AG04449 (cell line): ENCODE measurements at regions of chr2 and their contacts with region 1.

Region 1: GRCh38 chr2:74119912-74120825 is 27.5 kb downstream of the BOLA3 start:
- DNase-seq: peak; percentile 12
- H3K4me3 ChIP-seq: peak overlapping the region; percentile 80
- CTCF ChIP-seq: peak; percentile 83

Region 2: GRCh38 chr2:73920577-73921545 is 199.3 kb before region 1 on chr2:
- CTCF ChIA-PET with region 1: no interaction called
- POLR2A ChIA-PET with region 1: no interaction called
- DNase-seq: no peak
- H3K4me3 ChIP-seq: no peak overlapping the region
- CTCF ChIP-seq: peak; percentile 12

Region 3: GRCh38 chr2:74104839-74105238 is 15.3 kb before region 1 on chr2:
- CTCF ChIA-PET with region 1: interaction called, 19 read pairs
- POLR2A ChIA-PET with region 1: interaction called, 5 read pairs
- DNase-seq: no peak
- H3K4me3 ChIP-seq: no peak overlapping the region
- CTCF ChIP-seq: no peak

Region 4: DNA sequence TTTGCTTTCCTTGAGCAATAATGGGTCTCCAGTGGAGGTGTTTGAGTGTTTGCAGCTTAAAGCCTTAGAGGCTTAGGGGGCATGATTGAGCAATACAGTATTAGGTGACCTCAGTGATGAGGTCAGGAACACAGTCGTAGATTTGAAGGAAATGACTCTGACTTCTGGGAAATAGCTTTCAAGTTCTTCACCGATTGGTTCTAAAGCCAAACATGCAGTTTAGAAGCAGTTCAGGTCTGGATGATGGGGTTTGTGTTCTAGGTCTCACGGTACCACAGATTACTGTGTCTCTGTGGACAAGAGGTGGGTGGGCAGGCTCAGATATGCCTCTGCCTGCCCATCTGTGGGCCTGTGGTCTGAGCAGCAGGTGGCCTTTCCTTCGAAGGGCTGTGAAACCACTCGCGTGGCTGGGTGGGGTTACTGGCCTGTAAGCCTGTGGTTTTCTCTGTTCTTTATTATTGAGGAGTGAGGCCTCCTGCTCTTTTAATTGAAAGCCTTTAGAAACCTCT is 86.1 kb after region 1 on chr2:
- CTCF ChIA-PET with region 1: no interaction called
- POLR2A ChIA-PET with region 1: no interaction called
- DNase-seq: no peak
- H3K4me3 ChIP-seq: no peak overlapping the region
- CTCF ChIP-seq: no peak

Region 5: DNA sequence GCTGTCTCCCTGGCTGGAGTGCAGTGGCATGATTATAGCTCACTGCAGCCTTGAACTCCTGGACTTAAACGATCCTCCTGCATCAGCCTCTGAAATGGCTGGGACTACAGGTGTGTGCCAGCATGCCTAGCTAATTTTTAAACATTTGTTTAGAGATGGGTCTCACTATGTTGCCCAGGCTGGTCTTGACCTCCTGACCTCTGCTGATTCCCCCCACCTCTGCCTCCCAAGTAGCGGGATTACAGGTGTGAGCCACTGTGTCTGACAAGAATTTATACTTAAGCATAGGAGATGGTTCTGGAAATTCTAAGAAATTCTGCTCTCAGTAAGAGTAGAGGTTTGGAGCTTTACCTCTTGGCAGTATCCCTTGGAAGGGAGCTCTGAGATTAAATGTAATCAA is 96.5 kb after region 1 on chr2:
- CTCF ChIA-PET with region 1: no interaction called
- POLR2A ChIA-PET with region 1: no interaction called
- DNase-seq: no peak
- H3K4me3 ChIP-seq: no peak overlapping the region
- CTCF ChIP-seq: no peak